Activated B cell treated with CpG ODN at 0.5 μM for 24 hours (primary cell): ENCODE measurements at regions of chr13 and their contacts with region 1.

Region 1: DNA sequence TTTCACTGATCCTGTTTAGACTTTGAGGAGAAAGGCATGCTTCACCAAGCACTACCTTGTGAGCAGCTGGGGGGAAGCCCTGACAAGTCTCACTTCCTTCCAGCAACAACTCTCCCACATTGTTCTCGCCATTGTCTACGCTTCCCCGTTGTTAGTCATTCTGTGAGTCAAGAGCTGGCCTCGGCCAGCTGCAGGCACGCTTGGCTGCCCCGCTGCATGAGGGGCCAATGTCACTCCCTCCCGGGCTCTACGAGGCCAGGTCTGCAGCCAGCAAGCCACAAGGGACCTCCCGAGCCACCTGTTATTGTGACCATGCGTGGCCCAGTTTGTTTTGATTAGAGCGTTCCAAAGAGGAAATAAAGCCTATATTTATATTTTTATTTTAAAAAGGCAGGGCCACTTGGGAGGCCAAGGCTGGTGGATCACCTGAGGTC is 220.9 kb downstream of the FOXO1 start:
- DNase-seq: peak; percentile 80
- ATAC-seq: peak; percentile 96
- H3K4me3 Mint-ChIP-seq: peak overlapping the region; percentile 66
- H3K27ac Mint-ChIP-seq: peak overlapping the region; percentile 95
- H3K4me1 Mint-ChIP-seq: peaks cover 75% of the 10 kb centered on the region
- H3K27me3 Mint-ChIP-seq: no peaks in the 10 kb centered on the region
- CTCF ChIP-seq: no peak

Region 2: GRCh38 chr13:40069173-40070044 is 376.2 kb before region 1 on chr13:
- CTCF ChIA-PET with region 1: interaction called, 7 read pairs
- POLR2A ChIA-PET with region 1: interaction called, 4 read pairs
- intact Hi-C with region 1: loop called (anchors 1 kb)
- DNase-seq: peak; percentile 50
- ATAC-seq: peak; percentile 89
- H3K4me3 Mint-ChIP-seq: peak overlapping the region; percentile 47
- H3K27ac Mint-ChIP-seq: peak overlapping the region; percentile 19
- H3K4me1 Mint-ChIP-seq: peaks cover 12% of the 10 kb centered on the region
- H3K27me3 Mint-ChIP-seq: no peaks in the 10 kb centered on the region
- CTCF ChIP-seq: peak; percentile 27

Region 3: GRCh38 chr13:40388617-40389016 is 57.0 kb before region 1 on chr13:
- CTCF ChIA-PET with region 1: no interaction called
- POLR2A ChIA-PET with region 1: interaction called, 11 read pairs
- intact Hi-C with region 1: loop called (anchors 1 kb)
- DNase-seq: peak; percentile 46
- ATAC-seq: peak; percentile 97
- H3K4me3 Mint-ChIP-seq: peak overlapping the region; percentile 83
- H3K27ac Mint-ChIP-seq: peak overlapping the region; percentile 95
- H3K4me1 Mint-ChIP-seq: peaks cover 29% of the 10 kb centered on the region
- H3K27me3 Mint-ChIP-seq: no peaks in the 10 kb centered on the region
- CTCF ChIP-seq: no peak

Region 4: DNA sequence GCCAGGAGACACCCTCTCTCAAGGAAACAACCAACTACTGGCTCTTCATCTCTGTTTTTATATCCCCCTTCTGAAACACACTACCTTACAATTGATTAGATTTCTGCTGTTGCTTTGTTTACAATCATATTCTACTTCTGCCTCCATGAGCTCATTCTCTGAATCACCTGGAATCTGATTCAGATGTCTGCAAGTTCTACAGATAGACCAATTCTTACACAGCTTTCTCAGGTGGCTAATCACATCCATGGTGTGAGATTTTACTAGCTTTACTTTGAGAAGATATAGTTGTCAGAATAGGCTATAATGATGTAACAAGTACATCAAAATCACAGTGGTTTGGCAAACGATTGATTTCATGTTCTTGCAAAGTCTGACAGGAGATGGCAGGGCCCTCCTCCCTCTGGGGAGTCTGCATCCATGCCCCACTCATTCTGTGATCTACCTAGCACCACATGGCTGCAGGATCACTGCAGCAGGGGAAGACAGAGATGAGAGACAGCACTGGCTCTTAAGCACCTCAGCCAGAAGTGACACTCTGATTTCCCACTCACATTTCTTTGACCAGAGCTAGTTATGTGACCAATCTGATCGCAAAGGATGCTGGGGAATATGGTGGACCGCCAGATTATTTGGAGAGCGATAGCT is 22.9 kb before region 1 on chr13:
- CTCF ChIA-PET with region 1: no interaction called
- POLR2A ChIA-PET with region 1: interaction called, 5 read pairs
- intact Hi-C with region 1: loop called (anchors 1 kb)
- DNase-seq: no peak
- ATAC-seq: no peak
- H3K4me3 Mint-ChIP-seq: no peak overlapping the region
- H3K27ac Mint-ChIP-seq: no peak overlapping the region
- H3K4me1 Mint-ChIP-seq: peaks cover 28% of the 10 kb centered on the region
- H3K27me3 Mint-ChIP-seq: no peaks in the 10 kb centered on the region
- CTCF ChIP-seq: no peak

Region 5: DNA sequence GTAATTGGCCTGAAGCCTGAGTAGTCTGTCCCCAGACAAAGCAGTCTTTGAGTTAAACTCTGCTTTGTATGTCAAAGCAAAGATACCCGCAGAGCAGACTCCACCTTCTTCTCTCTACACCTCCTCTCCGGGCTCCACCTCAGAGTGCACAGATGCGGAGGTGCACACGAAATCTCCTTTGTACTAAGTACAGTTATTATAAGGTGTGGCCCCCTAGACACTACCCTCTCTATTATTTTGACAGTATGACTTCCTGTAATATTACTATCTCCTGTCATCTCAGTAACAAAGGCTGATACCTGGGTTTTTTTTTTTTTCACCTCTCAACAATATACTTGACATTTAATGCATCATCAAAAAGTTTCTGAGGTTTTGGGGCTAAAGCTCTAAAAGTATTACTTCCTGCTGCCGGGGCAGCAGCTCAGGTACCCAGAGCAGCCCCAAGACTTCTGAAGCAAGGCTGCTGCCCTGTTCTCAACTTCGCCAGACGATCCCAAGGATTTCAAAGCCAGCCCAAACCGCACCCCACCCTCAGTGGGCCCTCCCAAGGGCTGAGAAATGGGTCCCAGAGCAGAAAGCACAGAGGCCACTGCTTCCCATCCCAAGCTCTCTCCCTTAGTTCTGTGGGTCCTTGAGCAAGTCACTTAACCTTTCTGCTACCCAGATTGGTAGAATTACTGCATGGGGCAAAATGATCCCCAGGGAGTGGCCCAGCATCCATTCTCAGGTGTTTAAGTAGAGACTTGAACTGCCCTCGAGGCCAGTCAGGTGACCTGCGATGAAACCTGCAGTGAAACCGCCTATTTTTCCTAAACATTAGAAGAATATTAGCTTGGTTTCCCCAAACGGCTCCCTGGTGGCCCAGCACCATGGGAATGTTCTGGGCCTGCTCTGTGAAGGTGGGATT is 40.3 kb after region 1 on chr13:
- CTCF ChIA-PET with region 1: no interaction called
- POLR2A ChIA-PET with region 1: interaction called, 4 read pairs
- intact Hi-C with region 1: loop called (anchors 2 kb)
- DNase-seq: no peak
- ATAC-seq: peak; percentile 55
- H3K4me3 Mint-ChIP-seq: no peak overlapping the region
- H3K27ac Mint-ChIP-seq: peak overlapping the region; percentile 63
- H3K4me1 Mint-ChIP-seq: peaks cover 50% of the 10 kb centered on the region
- H3K27me3 Mint-ChIP-seq: peaks cover 1% of the 10 kb centered on the region
- CTCF ChIP-seq: no peak

Region 6: DNA sequence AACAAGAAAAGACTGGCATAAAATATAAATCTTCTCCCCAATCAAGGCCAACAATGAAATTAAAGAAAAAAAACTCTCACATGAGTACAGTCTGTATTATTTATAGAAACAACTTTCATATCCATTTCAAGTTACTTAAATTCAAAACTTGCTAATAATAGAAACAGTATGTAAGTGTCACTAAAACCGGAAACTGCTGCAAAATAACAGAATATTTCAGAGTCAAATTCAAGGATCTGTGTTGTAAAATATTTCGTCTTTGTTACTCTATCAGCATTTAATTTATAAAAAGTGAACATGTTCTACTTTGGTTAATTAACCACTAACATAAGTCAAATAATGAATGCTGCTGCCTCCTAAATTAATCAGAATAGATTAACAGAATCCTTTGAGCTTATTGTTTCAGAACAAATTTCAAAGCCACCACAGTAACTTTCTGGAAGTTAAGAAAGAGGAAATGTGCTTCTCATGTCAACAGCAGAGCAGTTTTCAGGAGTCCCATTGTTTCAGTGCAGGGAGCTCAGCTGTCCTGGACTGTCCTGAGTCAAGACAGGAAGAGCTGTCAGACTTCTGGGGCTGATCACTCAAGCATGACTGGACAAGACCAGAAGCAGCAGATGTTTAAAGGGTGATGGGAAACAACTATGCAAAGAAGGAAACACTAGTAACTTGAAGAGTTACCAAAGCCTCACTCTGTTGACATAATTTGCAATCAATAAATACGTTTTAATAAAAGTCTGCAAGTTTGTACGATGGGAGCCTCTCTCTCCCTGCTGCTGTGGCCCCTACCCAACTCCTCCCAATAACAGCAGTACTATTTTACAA is 143.9 kb after region 1 on chr13:
- CTCF ChIA-PET with region 1: no interaction called
- POLR2A ChIA-PET with region 1: interaction called, 5 read pairs
- intact Hi-C with region 1: loop called (anchors 1 kb)
- DNase-seq: no peak
- ATAC-seq: peak; percentile 89
- H3K4me3 Mint-ChIP-seq: peak overlapping the region; percentile 81
- H3K27ac Mint-ChIP-seq: peak overlapping the region; percentile 96
- H3K4me1 Mint-ChIP-seq: peaks cover 99% of the 10 kb centered on the region
- H3K27me3 Mint-ChIP-seq: no peaks in the 10 kb centered on the region
- CTCF ChIP-seq: no peak

Region 7: DNA sequence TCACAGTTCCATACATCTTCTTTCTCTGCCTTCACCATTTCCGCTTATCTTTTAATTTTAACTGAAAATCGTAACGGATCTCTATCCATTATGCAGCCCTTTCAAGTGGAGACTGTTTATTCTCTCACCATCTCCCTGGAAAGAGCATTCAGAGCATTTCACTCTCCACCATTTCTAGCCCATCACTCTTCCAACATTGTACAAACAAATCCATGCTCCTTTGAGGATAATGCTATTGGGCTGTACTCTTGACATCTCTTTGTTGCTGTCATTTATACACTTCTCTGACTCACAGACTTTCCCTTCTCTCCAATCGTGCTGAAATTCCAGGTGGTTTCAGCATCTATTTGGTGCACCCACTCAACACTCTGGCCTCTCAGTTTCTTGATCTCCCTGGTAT is 936.9 kb after region 1 on chr13:
- CTCF ChIA-PET with region 1: no interaction called
- POLR2A ChIA-PET with region 1: no interaction called
- intact Hi-C with region 1: no loop called
- DNase-seq: no peak
- ATAC-seq: no peak
- H3K4me3 Mint-ChIP-seq: no peak overlapping the region
- H3K27ac Mint-ChIP-seq: no peak overlapping the region
- H3K4me1 Mint-ChIP-seq: no peaks in the 10 kb centered on the region
- H3K27me3 Mint-ChIP-seq: peaks cover 4% of the 10 kb centered on the region
- CTCF ChIP-seq: no peak